Left lung (tissue), 14 donors: ENCODE measurements at regions of chr19 and their contacts with region 1.

Region 1: DNA sequence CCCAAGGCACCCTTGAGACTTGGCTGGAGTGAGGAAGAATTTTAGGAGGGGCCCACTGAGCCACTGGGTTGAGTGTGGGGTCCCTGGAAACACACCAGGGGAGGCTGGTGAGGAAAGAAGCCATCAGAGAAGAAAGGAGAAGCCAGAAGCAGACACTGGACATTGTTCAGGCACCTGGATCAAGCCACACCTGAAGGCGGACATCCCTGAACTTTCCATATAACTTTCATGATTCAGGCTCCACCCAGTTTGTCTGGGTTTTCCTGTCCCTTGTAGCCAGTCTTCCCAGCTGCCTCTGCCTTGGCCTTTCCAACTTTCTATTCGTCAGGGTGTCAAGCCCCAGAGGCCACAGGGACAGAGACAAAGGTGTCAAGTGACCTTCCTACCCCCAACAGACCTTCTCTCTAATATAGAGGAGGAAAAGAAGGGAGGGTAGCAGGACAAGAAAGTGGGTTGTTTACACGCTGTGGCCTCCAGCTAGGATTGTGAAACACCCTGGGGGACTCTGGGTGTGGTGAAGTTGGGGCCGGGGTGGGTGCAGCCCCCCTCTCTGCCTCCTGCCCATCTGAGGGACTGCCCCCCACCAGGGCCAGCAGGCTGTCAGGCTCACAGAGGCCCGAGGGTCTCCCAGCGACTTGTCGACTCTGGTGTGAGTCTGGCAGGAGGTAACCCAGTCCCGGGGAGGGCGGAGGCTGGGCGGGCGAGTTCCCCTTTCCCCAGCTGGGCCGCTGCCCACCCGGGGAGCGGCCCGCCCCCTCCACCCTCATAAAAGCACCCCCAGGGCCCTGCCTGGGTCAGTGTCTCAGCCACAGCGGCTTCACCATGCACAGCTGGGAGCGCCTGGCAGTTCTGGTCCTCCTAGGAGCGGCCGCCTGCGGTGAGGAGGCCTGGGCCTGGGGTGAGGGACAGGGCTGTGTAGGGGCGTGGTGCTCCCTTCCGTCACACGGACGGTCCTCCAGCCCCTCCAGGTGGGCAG is at the start of gene CFD:
- DNase-seq: peak in 2 of 4 donors; percentile 70 to 89
- ATAC-seq: peak; percentile 16
- H3K4me3 ChIP-seq: peak within 1 kb of the TSS; percentile 34 to 41
- H3K27ac ChIP-seq: peak within 1 kb of the TSS; percentile 48 to 79
- H3K4me1 ChIP-seq: peaks cover 0 to 47% of the 10 kb centered on the region in 2 donors
- H3K27me3 ChIP-seq: peaks cover 0 to 40% of the 10 kb centered on the region in 2 donors
- CTCF ChIP-seq: no peak
- polyA plus RNA-seq, gene CFD: 4.9 to 22.9 (median 8.1) TPM

Region 2: GRCh38 chr19:907183-907853 is 48.2 kb after region 1 on chr19:
- intact Hi-C with region 1: no loop called
- DNase-seq: no peak
- ATAC-seq: no peak
- H3K4me3 ChIP-seq: peak overlapping the region in 1 of 2 donors; percentile 4
- H3K27ac ChIP-seq: peak overlapping the region in 1 of 2 donors; percentile 96
- H3K4me1 ChIP-seq: peaks cover 0 to 54% of the 10 kb centered on the region in 2 donors
- H3K27me3 ChIP-seq: no peaks in the 10 kb centered on the region
- CTCF ChIP-seq: no peak

Region 3: DNA sequence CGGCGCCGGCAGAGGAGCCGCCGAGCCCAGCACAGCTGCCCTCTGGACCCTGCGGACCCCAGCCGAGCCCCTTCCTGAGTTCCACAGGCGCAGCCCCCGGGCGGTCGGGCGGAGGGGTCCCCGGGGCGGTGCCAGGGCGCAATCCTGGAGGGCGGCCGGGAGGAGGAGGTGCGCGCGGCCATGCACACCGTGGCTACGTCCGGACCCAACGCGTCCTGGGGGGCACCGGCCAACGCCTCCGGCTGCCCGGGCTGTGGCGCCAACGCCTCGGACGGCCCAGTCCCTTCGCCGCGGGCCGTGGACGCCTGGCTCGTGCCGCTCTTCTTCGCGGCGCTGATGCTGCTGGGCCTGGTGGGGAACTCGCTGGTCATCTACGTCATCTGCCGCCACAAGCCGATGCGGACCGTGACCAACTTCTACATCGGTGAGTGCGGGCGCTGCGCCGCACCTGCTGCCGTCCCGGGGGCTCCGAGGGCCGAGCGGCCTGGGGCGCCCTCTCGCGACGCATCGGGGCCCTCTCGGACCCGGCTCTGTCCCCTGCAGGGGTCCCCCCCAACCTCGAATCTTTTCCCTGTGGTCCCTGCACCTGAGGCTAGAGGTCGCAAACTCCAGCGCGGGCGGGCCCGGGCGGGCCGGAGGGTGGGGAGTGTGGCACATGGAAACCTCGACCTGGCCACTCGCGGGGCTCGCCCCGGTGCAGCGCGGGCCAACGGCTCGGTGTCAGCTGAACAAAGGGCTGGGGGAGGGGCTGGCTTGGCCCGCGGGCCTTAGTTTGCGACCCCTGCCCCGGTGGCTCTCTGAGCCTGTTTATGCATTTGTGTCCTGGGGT is 58.4 kb after region 1 on chr19 and contains the start of gene KISS1R:
- intact Hi-C with region 1: loop called in 1 of 2 experiments (anchors 5 kb)
- DNase-seq: peak in 2 of 4 donors; percentile 45 to 90
- ATAC-seq: peak; percentile 32
- H3K4me3 ChIP-seq: peak within 1 kb of the TSS in 1 of 2 donors; percentile 12
- H3K27ac ChIP-seq: no peak within 1 kb of the TSS
- H3K4me1 ChIP-seq: peaks cover 17 to 78% of the 10 kb centered on the region in 2 donors
- H3K27me3 ChIP-seq: peaks cover 45 to 56% of the 10 kb centered on the region in 2 donors
- CTCF ChIP-seq: peak; percentile 36 to 46
- polyA plus RNA-seq, gene KISS1R: 0.11 to 0.15 TPM in 2 of 6 donors, not detected in the others

Region 4: DNA sequence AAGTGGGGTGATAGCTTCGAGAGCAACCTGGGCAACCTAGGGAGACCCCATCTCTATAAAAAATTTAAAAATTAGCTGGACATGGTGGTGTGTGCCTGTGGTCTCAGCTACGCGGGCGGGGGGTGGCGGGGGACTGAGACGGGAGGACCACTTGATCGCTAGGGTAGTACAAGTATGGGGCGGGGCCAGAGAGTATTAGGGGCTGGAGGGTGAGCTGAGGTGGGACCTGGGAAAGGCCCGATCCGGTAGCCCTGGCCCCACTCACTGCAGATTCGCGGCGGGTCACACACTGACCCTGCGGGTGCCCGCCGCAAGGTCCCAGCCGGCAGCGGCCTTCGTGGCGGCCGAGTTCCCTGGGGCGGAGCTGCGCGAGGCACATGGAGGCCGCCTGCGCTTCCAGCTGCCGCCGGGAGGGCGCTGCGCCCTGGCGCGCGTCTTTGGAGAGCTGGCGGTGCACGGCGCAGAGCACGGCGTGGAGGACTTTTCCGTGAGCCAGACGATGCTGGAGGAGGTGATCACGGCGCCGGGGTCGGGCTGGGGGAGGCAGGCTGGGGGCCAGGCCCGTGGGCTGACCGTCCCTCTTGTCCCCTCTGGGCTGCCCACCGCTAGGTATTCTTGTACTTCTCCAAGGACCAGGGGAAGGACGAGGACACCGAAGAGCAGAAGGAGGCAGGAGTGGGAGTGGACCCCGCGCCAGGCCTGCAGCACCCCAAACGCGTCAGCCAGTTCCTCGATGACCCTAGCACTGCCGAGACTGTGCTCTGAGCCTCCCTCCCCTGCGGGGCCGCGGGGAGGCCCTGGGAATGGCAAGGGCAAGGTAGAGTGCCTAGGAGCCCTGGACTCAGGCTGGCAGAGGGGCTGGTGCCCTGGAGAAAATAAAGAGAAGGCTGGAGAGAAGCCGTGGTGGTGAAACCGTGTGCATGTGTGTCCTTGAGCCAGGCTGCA is 205.8 kb after region 1 on chr19:
- intact Hi-C with region 1: no loop called
- DNase-seq: peak in 3 of 4 donors; percentile 64 to 96 (median 77)
- ATAC-seq: peak; percentile 81
- H3K4me3 ChIP-seq: peak overlapping the region in 1 of 2 donors; percentile 23
- H3K27ac ChIP-seq: peak overlapping the region; percentile 53 to 65
- H3K4me1 ChIP-seq: peaks cover 6 to 58% of the 10 kb centered on the region in 2 donors
- H3K27me3 ChIP-seq: peaks cover 4 to 24% of the 10 kb centered on the region in 2 donors
- CTCF ChIP-seq: peak; percentile 87 to 95